Calu3 (cell line): ENCODE measurements at regions of chr6 and their contacts with region 1.

Region 1: GRCh38 chr6:52881996-52882841 is 27.3 kb downstream of the GSTA3 start:
- DNase-seq: peak; percentile 70
- H3K4me3 Mint-ChIP-seq: peak overlapping the region; percentile 84
- H3K27ac Mint-ChIP-seq: peak overlapping the region; percentile 68
- H3K4me1 Mint-ChIP-seq: no peaks in the 10 kb centered on the region
- H3K27me3 Mint-ChIP-seq: peaks cover 11% of the 10 kb centered on the region
- CTCF ChIP-seq: peak; percentile 80

Region 2: DNA sequence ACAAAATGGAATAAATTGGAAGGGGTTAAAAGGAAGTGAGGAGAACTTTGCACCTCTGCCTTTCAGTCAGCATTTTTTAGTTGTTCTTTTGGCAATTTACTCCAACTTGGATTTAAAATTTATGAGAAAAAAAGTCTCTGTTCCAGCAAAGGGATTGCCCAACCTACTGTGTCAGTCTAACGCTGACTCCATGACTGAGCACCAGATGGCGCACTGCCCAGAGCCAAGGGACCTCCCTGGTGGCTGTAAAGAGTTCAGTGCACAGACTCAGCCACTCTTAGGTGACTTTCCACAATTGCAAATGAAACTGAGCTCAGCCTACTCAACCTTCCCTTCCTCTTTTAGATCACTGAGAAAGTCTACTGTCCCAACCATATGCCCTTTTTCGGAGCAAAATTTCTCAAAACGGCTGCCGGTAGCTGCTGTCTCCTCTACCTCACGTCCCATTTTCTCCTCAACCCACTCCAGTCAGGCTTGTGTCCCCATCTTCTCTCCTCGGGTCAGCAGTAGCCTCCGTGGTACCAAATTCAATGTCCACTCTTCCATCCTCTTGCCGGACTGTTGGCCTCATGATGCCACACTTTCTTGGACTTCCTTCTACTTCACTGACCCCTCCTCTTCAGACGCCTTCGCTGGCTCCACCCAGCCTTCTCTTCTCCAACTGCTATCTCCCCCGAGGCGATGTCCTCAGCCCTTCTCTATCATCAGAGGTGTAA is 157.7 kb before region 1 on chr6:
- CTCF ChIA-PET with region 1: no interaction called
- intact Hi-C with region 1: loop called (anchors 10 kb)
- DNase-seq: peak; percentile 78
- H3K4me3 Mint-ChIP-seq: no peak overlapping the region
- H3K27ac Mint-ChIP-seq: no peak overlapping the region
- H3K4me1 Mint-ChIP-seq: peaks cover 23% of the 10 kb centered on the region
- H3K27me3 Mint-ChIP-seq: no peaks in the 10 kb centered on the region
- CTCF ChIP-seq: peak; percentile 66

Region 3: GRCh38 chr6:53294095-53294494 is 411.9 kb after region 1 on chr6:
- CTCF ChIA-PET with region 1: no interaction called
- intact Hi-C with region 1: no loop called
- DNase-seq: peak; percentile 3
- H3K4me3 Mint-ChIP-seq: no peak overlapping the region
- H3K27ac Mint-ChIP-seq: no peak overlapping the region
- H3K4me1 Mint-ChIP-seq: peaks cover 28% of the 10 kb centered on the region
- H3K27me3 Mint-ChIP-seq: no peaks in the 10 kb centered on the region
- CTCF ChIP-seq: peak; percentile 38